Activated CD8-positive, alpha-beta memory T cell treated with anti-CD3 and anti-CD28 coated beads, Interleukin-2, amount 10 ng/mL, durations not matched to agents 7 days and 5 days (primary cell): ENCODE measurements at regions of chr6 and their contacts with region 1.

Region 1: GRCh38 chr6:2952557-2953095 is 18.7 kb downstream of the SERPINB6 start:
- DNase-seq: peak; percentile 59
- ATAC-seq: peak; percentile 64
- H3K4me3 Mint-ChIP-seq: no peak overlapping the region
- H3K27ac Mint-ChIP-seq: no peak overlapping the region
- H3K4me1 Mint-ChIP-seq: peaks cover 3% of the 10 kb centered on the region
- H3K27me3 Mint-ChIP-seq: no peaks in the 10 kb centered on the region

Region 2: GRCh38 chr6:2634139-2634964 is 318.3 kb before region 1 on chr6:
- CTCF ChIA-PET with region 1: no interaction called
- DNase-seq: peak; percentile 83
- ATAC-seq: peak; percentile 97
- H3K4me3 Mint-ChIP-seq: peak overlapping the region; percentile 44
- H3K27ac Mint-ChIP-seq: no peak overlapping the region
- H3K4me1 Mint-ChIP-seq: peaks cover 2% of the 10 kb centered on the region
- H3K27me3 Mint-ChIP-seq: peaks cover 40% of the 10 kb centered on the region

Region 3: DNA sequence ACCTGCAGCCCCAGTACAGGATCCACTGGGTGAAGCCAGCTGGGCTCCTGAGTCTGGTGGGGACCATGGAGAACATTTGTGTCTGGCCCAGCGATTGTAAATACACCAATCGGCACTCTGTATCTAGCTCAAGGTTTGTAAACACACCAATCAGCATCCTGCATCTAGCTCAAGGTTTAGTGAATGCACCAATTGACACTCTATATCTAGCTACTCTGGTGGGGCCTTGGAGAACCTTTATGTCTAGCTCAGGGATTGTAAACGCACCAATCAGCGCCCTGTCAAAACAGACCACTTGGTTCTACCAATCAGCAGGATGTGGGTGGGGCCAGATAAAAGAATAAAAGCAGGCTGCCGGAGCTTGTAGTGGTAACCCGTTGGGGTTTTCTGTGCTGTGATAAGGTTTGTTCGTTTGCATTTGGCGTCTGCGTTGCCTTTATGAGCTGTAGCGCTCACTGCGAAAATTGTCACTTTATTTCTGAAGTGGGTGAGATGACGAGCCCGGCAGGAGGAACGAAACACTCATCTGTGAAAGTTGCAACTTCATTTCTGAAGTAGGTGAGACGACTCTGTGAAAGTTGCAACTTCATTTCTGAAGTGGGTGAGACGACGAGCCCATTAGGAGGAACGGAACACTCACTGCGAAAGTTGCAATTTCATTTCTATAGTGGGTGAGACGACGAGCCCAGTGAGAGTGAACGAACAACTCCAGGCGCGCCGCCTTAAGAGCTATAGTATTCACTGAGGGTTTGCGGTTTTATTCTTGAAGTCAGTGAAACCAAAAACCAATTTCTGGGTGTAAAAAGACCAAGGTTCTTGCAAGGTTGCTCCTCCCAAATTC is 12.4 kb before region 1 on chr6:
- CTCF ChIA-PET with region 1: interaction called, 14 read pairs
- DNase-seq: peak; percentile 92
- ATAC-seq: peak; percentile 90
- H3K4me3 Mint-ChIP-seq: peak overlapping the region; percentile 73
- H3K27ac Mint-ChIP-seq: peak overlapping the region; percentile 99
- H3K4me1 Mint-ChIP-seq: peaks cover 56% of the 10 kb centered on the region
- H3K27me3 Mint-ChIP-seq: peaks cover 29% of the 10 kb centered on the region

Region 4: DNA sequence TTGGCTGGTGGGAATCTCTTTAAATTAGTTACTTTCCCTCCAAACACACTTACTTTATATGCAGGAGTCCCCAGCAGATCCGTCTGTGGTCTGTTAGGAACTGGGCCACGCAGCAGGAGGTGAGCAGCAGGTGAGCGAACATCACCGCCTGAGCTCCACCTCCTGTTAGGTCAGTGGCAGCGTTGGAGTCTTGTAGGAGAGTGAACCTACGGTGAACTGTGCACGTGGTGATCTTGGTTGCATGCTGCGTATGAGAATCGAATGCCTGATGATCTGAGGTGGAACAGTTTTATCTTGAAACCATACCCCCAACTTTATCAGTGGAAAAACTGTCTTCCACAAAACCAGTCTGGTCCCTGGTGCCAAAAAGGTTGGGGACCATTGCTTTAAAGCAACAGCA is 13.7 kb after region 1 on chr6:
- CTCF ChIA-PET with region 1: interaction called, 11 read pairs
- DNase-seq: no peak
- ATAC-seq: no peak
- H3K4me3 Mint-ChIP-seq: no peak overlapping the region
- H3K27ac Mint-ChIP-seq: no peak overlapping the region
- H3K4me1 Mint-ChIP-seq: peaks cover 23% of the 10 kb centered on the region
- H3K27me3 Mint-ChIP-seq: no peaks in the 10 kb centered on the region

Region 5: DNA sequence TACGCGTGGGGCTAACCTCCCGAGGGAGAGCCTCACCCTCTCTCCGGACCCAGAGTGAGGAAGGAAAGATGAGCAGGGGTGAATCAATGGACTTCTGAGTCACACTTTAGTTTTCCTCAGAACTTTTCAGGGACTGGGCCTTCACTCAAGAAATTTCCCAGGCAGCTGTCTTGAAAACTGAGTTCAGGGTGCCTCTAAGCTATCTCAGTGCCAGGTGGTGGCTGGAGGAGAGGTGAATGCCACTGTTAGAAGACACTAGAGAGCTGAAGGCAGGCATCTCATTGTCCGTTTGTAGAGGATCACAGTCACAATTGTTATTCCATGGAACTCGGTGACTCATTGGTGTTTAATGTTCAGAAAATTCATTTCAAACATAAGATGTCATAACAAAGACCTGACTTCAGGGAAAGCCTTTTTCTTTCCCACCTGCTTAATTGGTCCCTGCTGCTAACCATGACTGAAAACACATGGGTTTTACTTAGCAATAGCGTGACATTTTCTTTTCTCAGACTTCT is 24.0 kb after region 1 on chr6:
- CTCF ChIA-PET with region 1: interaction called, 15 read pairs
- DNase-seq: peak; percentile 35
- ATAC-seq: no peak
- H3K4me3 Mint-ChIP-seq: peak overlapping the region; percentile 24
- H3K27ac Mint-ChIP-seq: peak overlapping the region; percentile 75
- H3K4me1 Mint-ChIP-seq: peaks cover 44% of the 10 kb centered on the region
- H3K27me3 Mint-ChIP-seq: peaks cover 10% of the 10 kb centered on the region